Activated CD4-positive, alpha-beta T cell treated with anti-CD3 and anti-CD28 coated beads for 36 hours (primary cell): ENCODE measurements at regions of chr2 and their contacts with region 1.

Region 1: GRCh38 chr2:121530212-121530705 is 421 bp upstream of the RNU4ATAC start:
- DNase-seq: peak; percentile 93
- ATAC-seq: peak; percentile 53
- H3K4me3 Mint-ChIP-seq: peak overlapping the region; percentile 82
- H3K27ac Mint-ChIP-seq: peak overlapping the region; percentile 90
- H3K4me1 Mint-ChIP-seq: peaks cover 60% of the 10 kb centered on the region
- H3K27me3 Mint-ChIP-seq: no peaks in the 10 kb centered on the region

Region 2: GRCh38 chr2:121076885-121077549 is 453.2 kb before region 1 on chr2:
- CTCF ChIA-PET with region 1: interaction called, 3 read pairs
- POLR2A ChIA-PET with region 1: interaction called, 18 read pairs
- intact Hi-C with region 1: no loop called
- DNase-seq: peak; percentile 87
- ATAC-seq: peak; percentile 60
- H3K4me3 Mint-ChIP-seq: no peak overlapping the region
- H3K27ac Mint-ChIP-seq: no peak overlapping the region
- H3K4me1 Mint-ChIP-seq: peaks cover 2% of the 10 kb centered on the region
- H3K27me3 Mint-ChIP-seq: peaks cover 23% of the 10 kb centered on the region

Region 3: DNA sequence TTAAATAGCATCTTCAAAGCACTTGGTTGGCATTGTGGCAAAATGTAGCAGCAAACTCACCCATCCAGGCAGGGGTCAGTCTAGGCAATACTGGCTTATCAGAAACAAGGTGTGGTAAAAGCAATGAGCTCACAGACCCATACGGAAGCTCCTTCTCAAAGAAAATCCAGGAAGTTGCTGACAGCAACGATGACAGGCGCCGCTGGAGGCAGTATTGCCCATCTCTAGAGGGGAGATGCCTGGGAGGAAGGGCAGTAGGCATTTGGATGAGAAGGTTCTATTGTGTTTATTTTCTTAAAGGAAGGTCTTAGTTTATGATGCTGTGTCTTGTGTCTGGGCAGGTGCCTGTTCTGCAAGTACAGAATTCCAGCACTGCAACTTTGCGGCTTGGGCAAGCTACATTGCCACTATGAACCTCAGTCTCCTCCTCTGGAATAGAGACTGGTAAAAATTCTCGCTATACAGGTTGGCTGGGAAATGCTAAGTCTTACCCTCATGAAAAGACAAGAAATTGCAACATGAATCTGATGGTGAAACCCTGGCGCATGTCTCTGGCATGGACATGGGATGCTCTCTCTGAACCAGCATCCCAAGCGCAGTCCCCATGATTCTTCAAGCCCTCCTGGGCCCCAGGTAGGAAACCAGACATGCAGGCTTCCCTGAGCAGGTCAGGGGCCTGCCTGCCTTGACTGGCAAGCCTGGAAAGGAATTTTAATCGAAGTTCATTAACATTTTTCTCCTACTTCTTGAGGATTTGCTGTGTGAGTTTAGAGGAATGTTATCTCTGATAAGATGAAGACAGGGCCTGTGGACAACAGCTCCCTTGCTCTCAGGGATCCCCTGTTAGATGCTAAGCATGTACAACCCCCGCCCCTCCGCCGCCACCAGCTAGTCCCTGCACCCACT is 401.3 kb before region 1 on chr2:
- CTCF ChIA-PET with region 1: no interaction called
- POLR2A ChIA-PET with region 1: no interaction called
- intact Hi-C with region 1: no loop called
- DNase-seq: peak; percentile 56
- ATAC-seq: peak; percentile 61
- H3K4me3 Mint-ChIP-seq: no peak overlapping the region
- H3K27ac Mint-ChIP-seq: no peak overlapping the region
- H3K4me1 Mint-ChIP-seq: no peaks in the 10 kb centered on the region
- H3K27me3 Mint-ChIP-seq: no peaks in the 10 kb centered on the region

Region 4: DNA sequence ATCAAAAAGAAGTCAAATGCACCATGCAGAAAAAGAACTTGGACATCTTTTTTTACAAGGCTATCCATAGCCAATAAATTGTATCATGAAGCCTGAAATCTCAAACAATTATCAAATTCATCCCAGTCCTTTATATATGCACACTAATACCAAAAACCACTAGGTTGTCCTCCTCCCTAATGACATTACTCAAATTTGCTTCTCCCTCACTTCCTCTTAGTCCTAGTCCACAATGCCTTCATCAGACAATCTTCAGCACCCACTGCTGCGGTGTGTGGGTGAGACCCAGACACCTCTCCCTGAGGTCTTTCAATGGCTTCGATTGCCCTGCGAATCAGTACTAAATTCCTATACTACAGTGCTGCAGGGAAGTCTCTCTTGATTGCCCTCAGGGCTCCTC is 60.9 kb after region 1 on chr2:
- CTCF ChIA-PET with region 1: no interaction called
- POLR2A ChIA-PET with region 1: interaction called, 5 read pairs
- intact Hi-C with region 1: loop called in 1 of 2 experiments (anchors 5 kb)
- DNase-seq: no peak
- ATAC-seq: no peak
- H3K4me3 Mint-ChIP-seq: no peak overlapping the region
- H3K27ac Mint-ChIP-seq: no peak overlapping the region
- H3K4me1 Mint-ChIP-seq: peaks cover 19% of the 10 kb centered on the region
- H3K27me3 Mint-ChIP-seq: no peaks in the 10 kb centered on the region

Region 5: GRCh38 chr2:121603185-121603584 is 72.9 kb after region 1 on chr2:
- CTCF ChIA-PET with region 1: no interaction called
- POLR2A ChIA-PET with region 1: no interaction called
- intact Hi-C with region 1: no loop called
- DNase-seq: no peak
- ATAC-seq: no peak
- H3K4me3 Mint-ChIP-seq: no peak overlapping the region
- H3K27ac Mint-ChIP-seq: no peak overlapping the region
- H3K4me1 Mint-ChIP-seq: peaks cover 35% of the 10 kb centered on the region
- H3K27me3 Mint-ChIP-seq: no peaks in the 10 kb centered on the region

Region 6: DNA sequence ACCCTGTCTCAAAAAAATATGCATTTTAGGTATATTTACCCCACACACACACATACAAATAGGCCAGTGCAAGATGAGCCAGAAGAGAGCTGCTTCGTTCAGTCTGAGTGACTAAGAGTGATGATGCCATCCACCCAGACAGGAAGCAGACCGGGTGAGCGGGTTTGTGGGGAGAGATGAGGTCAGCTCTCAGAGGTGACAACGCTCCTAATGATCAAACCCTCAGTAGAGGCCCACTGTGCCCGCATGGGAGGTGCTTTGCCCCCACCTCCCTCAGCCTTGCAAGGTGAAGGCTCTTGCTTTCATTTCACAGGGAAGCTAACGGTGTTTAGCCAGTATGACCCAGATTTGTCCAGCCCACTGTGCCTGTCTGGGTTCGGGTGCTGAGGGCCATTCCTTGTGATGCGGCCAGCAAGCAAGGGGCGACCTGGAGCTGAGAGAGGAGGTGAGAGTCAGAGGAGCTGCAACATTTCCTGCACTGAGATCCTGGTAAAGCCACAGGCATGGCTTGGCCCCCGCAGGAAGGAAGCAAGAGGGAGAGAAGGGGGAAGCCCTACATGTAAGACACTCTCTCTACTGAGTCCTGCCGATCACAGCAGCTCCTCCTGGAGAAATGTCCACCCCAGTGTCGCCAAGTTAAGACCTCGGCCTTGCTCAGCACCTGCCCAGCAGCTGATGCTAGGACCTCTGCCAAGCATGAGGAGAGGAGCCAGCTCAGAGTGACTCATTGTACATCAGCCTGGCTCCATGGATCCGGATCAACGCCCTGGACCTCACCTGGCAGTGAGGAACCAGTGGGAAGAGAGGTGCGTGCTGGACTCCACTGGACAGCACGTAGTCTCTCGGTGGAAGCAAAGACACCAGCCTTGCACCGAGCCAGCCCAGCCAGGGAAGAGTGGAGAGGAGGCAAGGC is 169.4 kb after region 1 on chr2:
- CTCF ChIA-PET with region 1: interaction called, 8 read pairs
- POLR2A ChIA-PET with region 1: interaction called, 52 read pairs
- intact Hi-C with region 1: loop called (anchors 1 kb)
- DNase-seq: peak; percentile 95
- ATAC-seq: peak; percentile 98
- H3K4me3 Mint-ChIP-seq: peak overlapping the region; percentile 64
- H3K27ac Mint-ChIP-seq: peak overlapping the region; percentile 95
- H3K4me1 Mint-ChIP-seq: peaks cover 44% of the 10 kb centered on the region
- H3K27me3 Mint-ChIP-seq: no peaks in the 10 kb centered on the region

Region 7: DNA sequence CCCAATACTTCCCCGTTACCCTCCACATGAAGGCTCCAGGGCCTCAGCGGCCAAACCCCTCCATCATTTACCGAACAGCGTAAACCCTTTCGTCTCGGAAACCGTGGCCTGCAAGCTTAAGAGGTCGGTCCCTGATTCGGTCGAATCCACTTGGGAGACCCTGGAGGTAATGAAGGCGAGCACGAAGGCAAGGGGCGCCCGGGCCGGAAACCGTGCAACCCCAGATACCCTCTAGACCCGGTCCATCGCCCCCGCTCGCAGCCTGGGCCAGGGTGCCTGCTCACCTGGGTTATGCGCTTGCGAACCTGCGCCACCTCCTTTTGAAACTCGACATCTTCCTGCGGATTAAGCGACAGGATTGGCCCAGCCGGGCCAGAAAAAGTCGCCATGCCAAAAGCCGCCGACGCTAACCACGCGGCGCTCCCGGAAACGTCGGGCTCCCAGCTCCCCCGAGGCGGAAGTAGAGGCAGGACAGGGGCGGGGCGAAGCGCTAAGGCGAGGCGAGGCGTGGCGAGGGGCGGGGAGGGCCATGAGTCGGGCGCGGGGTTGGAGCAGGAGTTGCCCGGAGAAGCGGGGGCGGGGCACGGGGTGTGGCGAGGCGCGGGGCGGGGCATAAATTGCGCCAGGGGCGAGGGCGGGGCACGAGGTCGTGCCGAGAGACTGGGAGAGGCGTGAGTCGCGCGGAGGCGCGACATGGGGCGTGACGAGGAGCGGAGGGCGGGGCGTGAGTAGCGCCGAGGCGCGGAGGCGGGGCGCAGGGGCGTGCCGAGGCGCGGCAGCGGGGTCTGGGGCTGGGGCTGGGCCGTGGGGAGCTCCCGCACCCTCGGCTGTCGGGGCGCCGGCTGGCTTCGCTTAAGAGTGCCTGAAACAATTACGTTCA is 206.4 kb after region 1 on chr2 and contains the start of gene NIFK:
- CTCF ChIA-PET with region 1: interaction called, 4 read pairs
- POLR2A ChIA-PET with region 1: interaction called, 42 read pairs
- intact Hi-C with region 1: loop called (anchors 1 kb)
- DNase-seq: peak; percentile 100
- ATAC-seq: peak; percentile 91
- H3K4me3 Mint-ChIP-seq: peak within 1 kb of the TSS; percentile 83
- H3K27ac Mint-ChIP-seq: peak within 1 kb of the TSS; percentile 97
- H3K4me1 Mint-ChIP-seq: peaks cover 40% of the 10 kb centered on the region
- H3K27me3 Mint-ChIP-seq: no peaks in the 10 kb centered on the region
- total RNA-seq, gene NIFK: 148 to 213 TPM

Region 8: GRCh38 chr2:121748202-121748601 is 217.9 kb after region 1 on chr2:
- CTCF ChIA-PET with region 1: no interaction called
- POLR2A ChIA-PET with region 1: no interaction called
- intact Hi-C with region 1: no loop called
- DNase-seq: no peak
- ATAC-seq: no peak
- H3K4me3 Mint-ChIP-seq: no peak overlapping the region
- H3K27ac Mint-ChIP-seq: no peak overlapping the region
- H3K4me1 Mint-ChIP-seq: peaks cover 12% of the 10 kb centered on the region
- H3K27me3 Mint-ChIP-seq: no peaks in the 10 kb centered on the region

Region 9: DNA sequence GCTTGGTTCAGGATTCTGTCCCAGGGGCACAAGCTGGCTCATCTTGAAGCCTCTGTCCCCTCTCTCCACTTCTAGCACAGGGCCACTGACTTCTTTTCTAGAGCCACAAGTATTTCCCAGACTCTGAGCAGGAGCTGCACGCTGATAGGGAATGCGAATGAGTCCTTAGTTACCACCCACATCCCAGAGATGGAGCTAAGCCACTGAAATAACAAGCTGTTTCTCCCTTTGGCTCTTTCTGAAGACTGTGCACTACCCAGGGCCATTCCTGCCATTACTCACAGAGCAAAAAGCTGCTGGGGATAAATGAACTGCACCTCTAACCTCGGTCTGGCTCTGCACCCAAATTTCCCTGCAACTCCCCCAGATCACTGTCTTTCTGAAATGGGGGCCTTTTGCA is 295.8 kb after region 1 on chr2:
- CTCF ChIA-PET with region 1: no interaction called
- POLR2A ChIA-PET with region 1: no interaction called
- intact Hi-C with region 1: no loop called
- DNase-seq: no peak
- ATAC-seq: no peak
- H3K4me3 Mint-ChIP-seq: no peak overlapping the region
- H3K27ac Mint-ChIP-seq: no peak overlapping the region
- H3K4me1 Mint-ChIP-seq: no peaks in the 10 kb centered on the region
- H3K27me3 Mint-ChIP-seq: no peaks in the 10 kb centered on the region